OCI-LY7 (cell line): ENCODE measurements at regions of chr2 and their contacts with region 1.

Region 1: GRCh38 chr2:234102112-234102511 is 51.6 kb downstream of the SPP2 start:
- DNase-seq: peak; percentile 15
- H3K4me3 ChIP-seq: no peak overlapping the region
- H3K27ac ChIP-seq: no peak overlapping the region
- H3K4me1 ChIP-seq: peaks cover 17% of the 10 kb centered on the region
- CTCF ChIP-seq: no peak

Region 2: DNA sequence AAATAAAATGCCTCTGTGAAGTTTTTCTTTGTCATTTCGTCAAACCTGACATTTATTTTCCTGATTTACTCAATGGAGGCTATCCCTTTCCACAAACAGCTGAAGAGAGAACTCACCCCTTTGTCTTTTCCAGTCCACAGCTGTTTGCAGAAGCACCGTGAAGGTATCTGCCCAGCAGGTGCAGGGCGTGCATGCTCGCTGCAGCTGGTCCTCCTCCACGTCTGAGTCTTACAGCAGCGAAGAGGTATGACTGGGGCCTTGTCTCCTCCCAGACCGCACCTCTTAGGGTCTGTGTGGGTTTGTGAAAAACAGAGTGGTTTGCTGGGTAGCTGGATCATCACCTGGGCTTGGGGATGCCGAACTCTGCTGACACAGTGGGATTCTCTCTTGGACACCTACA is 41.9 kb before region 1 on chr2:
- CTCF ChIA-PET with region 1: no interaction called
- POLR2A ChIA-PET with region 1: no interaction called
- intact Hi-C with region 1: no loop called
- DNase-seq: no peak
- H3K4me3 ChIP-seq: no peak overlapping the region
- H3K27ac ChIP-seq: no peak overlapping the region
- H3K4me1 ChIP-seq: no peaks in the 10 kb centered on the region
- CTCF ChIP-seq: no peak

Region 3: DNA sequence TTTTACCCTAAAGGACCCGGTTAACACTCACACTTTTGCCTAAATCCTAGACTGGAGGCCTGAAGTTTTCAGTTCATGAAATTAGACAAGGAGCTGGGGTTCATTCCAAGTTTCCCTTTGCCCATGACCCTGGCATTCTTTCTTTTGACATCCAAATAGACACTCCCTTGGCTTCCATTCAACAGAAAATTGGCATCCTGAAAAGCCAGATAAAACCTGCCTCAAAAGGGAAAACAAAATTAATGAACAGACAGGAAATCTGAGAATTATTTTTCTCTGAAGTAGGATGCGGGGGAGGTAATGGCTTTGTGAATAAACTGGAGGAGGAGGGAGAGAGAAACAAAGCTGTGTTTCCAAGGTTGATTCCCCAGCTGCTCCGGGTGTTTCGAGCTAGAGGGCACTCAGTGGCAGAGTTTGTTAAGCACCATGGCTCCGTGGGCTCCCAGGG is 10.7 kb before region 1 on chr2:
- CTCF ChIA-PET with region 1: no interaction called
- POLR2A ChIA-PET with region 1: interaction called, 10 read pairs
- intact Hi-C with region 1: no loop called
- DNase-seq: no peak
- H3K4me3 ChIP-seq: no peak overlapping the region
- H3K27ac ChIP-seq: no peak overlapping the region
- H3K4me1 ChIP-seq: no peaks in the 10 kb centered on the region
- CTCF ChIP-seq: no peak

Region 4: GRCh38 chr2:234116050-234116449 is 13.9 kb after region 1 on chr2:
- CTCF ChIA-PET with region 1: no interaction called
- POLR2A ChIA-PET with region 1: no interaction called
- intact Hi-C with region 1: no loop called
- DNase-seq: no peak
- H3K4me3 ChIP-seq: no peak overlapping the region
- H3K27ac ChIP-seq: no peak overlapping the region
- H3K4me1 ChIP-seq: no peaks in the 10 kb centered on the region
- CTCF ChIP-seq: no peak

Region 5: DNA sequence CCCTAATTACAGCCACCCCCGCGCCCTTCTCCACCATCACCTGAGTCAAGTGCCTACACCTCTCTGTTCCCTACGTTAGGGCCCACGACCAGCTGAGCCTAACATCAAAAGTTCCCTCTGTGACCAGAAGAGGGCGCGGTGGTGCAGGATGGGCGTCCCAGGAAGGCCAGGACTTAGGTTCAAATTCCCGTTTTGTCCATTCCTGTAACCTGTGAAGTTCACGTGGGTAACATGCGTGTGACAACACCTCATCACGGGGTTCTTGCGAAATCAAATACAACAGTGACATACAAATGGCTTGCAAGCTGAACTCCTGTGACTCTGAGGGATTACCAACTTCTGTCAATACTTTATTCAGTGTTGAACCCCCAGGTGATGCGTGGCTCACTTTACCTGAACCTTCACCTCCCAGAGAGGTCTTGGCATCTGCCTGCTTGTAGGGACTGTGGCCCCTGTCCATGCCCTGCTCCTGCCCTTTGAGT is 186.9 kb after region 1 on chr2:
- CTCF ChIA-PET with region 1: no interaction called
- POLR2A ChIA-PET with region 1: no interaction called
- intact Hi-C with region 1: no loop called
- DNase-seq: peak; percentile 72
- H3K4me3 ChIP-seq: peak overlapping the region; percentile 4
- H3K27ac ChIP-seq: peak overlapping the region; percentile 97
- H3K4me1 ChIP-seq: peaks cover 56% of the 10 kb centered on the region
- CTCF ChIP-seq: peak; percentile 95